ENCODE measurements at regions of chr11 and their contacts with region 1.

Region 1: DNA sequence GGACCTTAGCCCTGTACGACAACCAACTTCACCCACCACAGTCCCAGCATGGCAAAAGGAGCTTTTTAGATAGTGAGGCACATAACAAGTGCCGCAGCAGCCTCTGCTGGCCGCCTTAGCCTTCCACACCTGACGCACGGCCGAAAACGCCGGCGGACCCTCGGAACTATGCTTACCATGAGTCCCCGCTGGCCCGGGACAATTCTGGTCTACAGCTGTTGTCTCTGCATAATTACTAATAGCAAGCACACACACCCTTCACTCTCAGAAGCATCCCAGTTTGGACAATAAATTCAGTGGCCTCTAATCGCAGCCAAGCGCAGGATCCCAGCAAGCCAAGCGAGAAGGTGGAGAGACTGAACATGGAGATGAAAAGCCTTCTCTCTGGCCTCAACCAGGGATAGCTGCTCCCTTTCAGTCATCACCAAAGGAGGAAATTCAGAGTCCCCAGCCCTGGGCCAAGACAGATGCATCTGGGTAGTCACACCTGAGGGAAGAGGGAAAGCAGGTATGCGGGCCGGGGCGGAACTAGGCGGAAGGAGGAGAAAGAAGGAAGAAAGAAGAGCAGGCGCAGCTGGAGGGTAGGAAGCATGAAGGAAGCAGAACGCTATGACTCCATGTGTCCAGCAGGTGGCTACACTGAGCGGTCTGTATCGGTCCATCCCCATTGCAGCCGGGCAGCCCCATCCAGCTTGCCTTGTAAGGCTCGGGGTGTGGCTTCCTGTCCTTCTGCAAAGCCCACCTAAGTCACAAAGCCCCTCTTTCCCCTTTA is 40.3 kb downstream of the BUD13 start:
- DNase-seq: peak; percentile 74
- H3K4me3 Mint-ChIP-seq: no peak overlapping the region
- H3K27ac Mint-ChIP-seq: no peak overlapping the region
- H3K4me1 Mint-ChIP-seq: peaks cover 7% of the 10 kb centered on the region
- H3K27me3 Mint-ChIP-seq: no peaks in the 10 kb centered on the region
- CTCF ChIP-seq: peak; percentile 87

Region 2: DNA sequence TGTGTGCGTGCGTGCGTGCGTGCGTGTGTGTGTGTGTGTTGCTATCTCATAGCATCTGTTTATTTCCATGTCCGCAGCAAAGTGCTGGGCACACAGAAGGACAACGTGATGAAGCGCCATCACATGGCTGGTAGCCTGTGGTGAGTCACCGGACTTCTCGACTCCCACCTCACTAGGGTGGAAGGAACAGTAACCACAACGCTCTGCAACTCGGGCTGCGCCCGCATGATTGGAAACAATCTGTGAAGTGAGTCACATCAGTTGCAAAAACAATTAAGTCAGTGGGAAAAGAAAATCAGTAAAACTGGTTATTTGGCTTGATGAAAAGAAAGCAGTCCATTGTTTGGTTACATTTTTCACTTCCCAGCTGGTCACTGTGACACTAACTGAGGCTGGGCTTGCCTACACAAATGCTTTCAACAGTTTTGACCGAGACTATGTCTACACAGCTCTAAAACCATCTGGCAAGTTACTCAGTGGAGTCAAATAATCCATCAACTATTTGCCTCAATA is 790.9 kb before region 1 on chr11:
- CTCF ChIA-PET with region 1: no interaction called
- POLR2A ChIA-PET with region 1: no interaction called
- intact Hi-C with region 1: no loop called
- DNase-seq: no peak
- H3K4me3 Mint-ChIP-seq: no peak overlapping the region
- H3K27ac Mint-ChIP-seq: no peak overlapping the region
- H3K4me1 Mint-ChIP-seq: no peaks in the 10 kb centered on the region
- H3K27me3 Mint-ChIP-seq: no peaks in the 10 kb centered on the region
- CTCF ChIP-seq: no peak

Region 3: GRCh38 chr11:116716621-116717020 is 15.8 kb before region 1 on chr11:
- CTCF ChIA-PET with region 1: interaction called, 19 read pairs
- POLR2A ChIA-PET with region 1: interaction called, 3 read pairs
- intact Hi-C with region 1: no loop called
- DNase-seq: no peak
- H3K4me3 Mint-ChIP-seq: no peak overlapping the region
- H3K27ac Mint-ChIP-seq: no peak overlapping the region
- H3K4me1 Mint-ChIP-seq: no peaks in the 10 kb centered on the region
- H3K27me3 Mint-ChIP-seq: no peaks in the 10 kb centered on the region
- CTCF ChIP-seq: no peak

Region 4: GRCh38 chr11:116721988-116722387 is 10.5 kb before region 1 on chr11:
- CTCF ChIA-PET with region 1: interaction called, 19 read pairs
- POLR2A ChIA-PET with region 1: interaction called, 3 read pairs
- intact Hi-C with region 1: no loop called
- DNase-seq: no peak
- H3K4me3 Mint-ChIP-seq: no peak overlapping the region
- H3K27ac Mint-ChIP-seq: no peak overlapping the region
- H3K4me1 Mint-ChIP-seq: no peaks in the 10 kb centered on the region
- H3K27me3 Mint-ChIP-seq: peaks cover 35% of the 10 kb centered on the region
- CTCF ChIP-seq: no peak

Measured in MCF 10A (cell line).